ENCODE measurements at regions of chr3 and their contacts with region 1.

Region 1: DNA sequence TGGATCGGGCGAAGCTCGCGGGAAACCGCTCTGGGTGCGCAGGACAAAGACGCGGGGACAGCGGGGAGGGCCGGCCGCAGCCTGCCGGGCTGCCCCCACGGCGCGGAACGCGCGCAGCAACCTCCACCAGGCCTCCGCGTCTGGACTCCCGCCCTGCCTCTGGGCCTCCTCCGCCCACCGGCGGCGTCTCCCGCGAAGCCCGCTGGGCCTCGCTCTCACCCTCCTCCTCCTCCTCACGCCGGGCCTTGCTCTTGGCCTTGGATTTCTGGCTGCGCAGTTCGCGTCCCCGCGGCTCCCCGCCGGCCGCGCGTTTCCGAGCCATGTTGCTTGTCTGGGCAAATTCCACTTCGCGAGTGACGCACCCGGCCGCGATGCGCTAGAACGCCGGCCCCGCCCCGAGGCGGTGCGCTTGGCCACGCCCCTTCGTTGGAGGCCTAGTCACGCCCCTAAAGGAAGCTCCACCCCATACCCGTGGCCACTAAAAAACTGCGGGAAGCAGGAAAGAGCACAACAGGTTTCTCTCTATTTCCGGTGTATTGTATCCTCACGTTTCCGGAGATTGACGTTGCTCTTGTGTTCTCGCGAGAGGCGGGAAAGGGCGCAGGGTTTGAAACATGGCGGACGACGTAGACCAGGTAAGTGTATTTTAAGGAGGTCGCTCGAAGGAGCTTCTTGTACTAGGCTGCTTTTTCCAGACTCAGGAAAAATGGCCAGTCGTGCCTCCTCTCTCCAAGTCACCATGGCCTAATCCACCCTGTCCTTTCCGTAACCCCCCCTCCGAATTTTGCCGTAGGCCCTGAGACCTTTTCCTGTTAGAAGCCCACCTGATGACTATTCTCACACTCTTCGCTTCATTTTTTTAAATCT is at the starts of genes LSM3 and XPC:
- DNase-seq: peak; percentile 96 to 99 (median 98)
- ATAC-seq: peak; percentile 88
- H3K4me3 ChIP-seq: peak within 1 kb of the TSS; percentile 79
- H3K4me3 Mint-ChIP-seq: peak within 1 kb of the TSS; percentile 98
- H3K27ac ChIP-seq: peak within 1 kb of the TSS; percentile 94 to 97
- H3K27ac Mint-ChIP-seq: peak within 1 kb of the TSS; percentile 93
- H3K4me1 ChIP-seq: peaks cover 43% of the 10 kb centered on the region
- H3K4me1 Mint-ChIP-seq: peaks cover 76% of the 10 kb centered on the region
- H3K27me3 ChIP-seq: no peaks in the 10 kb centered on the region
- H3K27me3 Mint-ChIP-seq: no peaks in the 10 kb centered on the region
- CTCF ChIP-seq: no peak
- total RNA-seq, gene LSM3: 6.5 to 6.9 TPM
- total RNA-seq, gene XPC: 59.2 to 65.1 TPM

Region 2: DNA sequence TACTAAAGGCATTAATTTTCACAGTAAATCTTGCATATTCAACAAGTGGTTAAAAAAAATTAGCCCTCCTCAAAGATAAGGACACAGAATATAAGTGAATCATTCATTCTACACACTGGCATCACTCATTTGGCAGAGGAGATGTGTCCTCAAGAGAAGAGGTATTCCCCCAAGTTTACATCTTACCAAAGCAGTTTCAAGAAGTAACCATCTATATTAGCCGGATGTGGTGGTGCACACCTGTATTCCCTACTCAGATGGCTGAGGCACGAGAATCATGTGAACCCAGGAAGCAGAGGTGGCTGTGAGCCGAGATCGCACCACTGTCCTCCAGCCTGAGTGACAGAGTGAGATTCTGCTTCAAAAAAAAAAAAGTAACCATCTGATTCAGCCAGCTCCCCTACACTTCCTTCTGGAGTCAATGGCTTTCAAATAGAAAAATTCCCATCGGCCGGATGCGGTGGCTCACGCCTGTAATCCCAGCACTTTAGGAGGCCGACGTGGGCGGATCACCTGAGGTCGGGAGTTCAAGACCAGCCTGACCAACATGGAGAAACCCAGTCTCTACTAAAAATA is 1530.0 kb before region 1 on chr3:
- CTCF ChIA-PET with region 1: no interaction called
- POLR2A ChIA-PET with region 1: no interaction called
- intact Hi-C with region 1: no loop called
- DNase-seq: peak in 2 of 14 experiments; percentile 15 to 32
- ATAC-seq: peak; percentile 32
- H3K4me3 ChIP-seq: no peak overlapping the region
- H3K4me3 Mint-ChIP-seq: no peak overlapping the region
- H3K27ac ChIP-seq: no peak overlapping the region
- H3K27ac Mint-ChIP-seq: peak overlapping the region; percentile 51
- H3K4me1 ChIP-seq: peaks cover 24% of the 10 kb centered on the region
- H3K4me1 Mint-ChIP-seq: peaks cover 72% of the 10 kb centered on the region
- H3K27me3 ChIP-seq: no peaks in the 10 kb centered on the region
- H3K27me3 Mint-ChIP-seq: no peaks in the 10 kb centered on the region
- CTCF ChIP-seq: no peak

Region 3: GRCh38 chr3:12841149-12841970 is 1337.1 kb before region 1 on chr3 and contains the start of gene RPL32:
- CTCF ChIA-PET with region 1: interaction called, 4 read pairs
- POLR2A ChIA-PET with region 1: no interaction called
- intact Hi-C with region 1: loop called in 1 of 2 experiments (anchors 5 kb)
- DNase-seq: peak; percentile 76 to 96 (median 82)
- ATAC-seq: peak; percentile 91
- H3K4me3 ChIP-seq: peak within 1 kb of the TSS; percentile 86
- H3K4me3 Mint-ChIP-seq: peak within 1 kb of the TSS; percentile 93
- H3K27ac ChIP-seq: peak within 1 kb of the TSS; percentile 90 to 94
- H3K27ac Mint-ChIP-seq: peak within 1 kb of the TSS; percentile 99
- H3K4me1 ChIP-seq: peaks cover 39% of the 10 kb centered on the region
- H3K4me1 Mint-ChIP-seq: peaks cover 55% of the 10 kb centered on the region
- H3K27me3 ChIP-seq: no peaks in the 10 kb centered on the region
- H3K27me3 Mint-ChIP-seq: no peaks in the 10 kb centered on the region
- CTCF ChIP-seq: peak; percentile 74
- total RNA-seq, gene RPL32: 4,308 to 4,667 TPM

Region 4: GRCh38 chr3:13537921-13538320 is 640.6 kb before region 1 on chr3:
- CTCF ChIA-PET with region 1: no interaction called
- POLR2A ChIA-PET with region 1: no interaction called
- intact Hi-C with region 1: no loop called
- DNase-seq: no peak
- ATAC-seq: no peak
- H3K4me3 ChIP-seq: no peak overlapping the region
- H3K4me3 Mint-ChIP-seq: no peak overlapping the region
- H3K27ac ChIP-seq: no peak overlapping the region
- H3K27ac Mint-ChIP-seq: no peak overlapping the region
- H3K4me1 ChIP-seq: peaks cover 8% of the 10 kb centered on the region
- H3K4me1 Mint-ChIP-seq: peaks cover 8% of the 10 kb centered on the region
- H3K27me3 ChIP-seq: peaks cover 0 to 2% of the 10 kb centered on the region in 2 experiments
- H3K27me3 Mint-ChIP-seq: no peaks in the 10 kb centered on the region
- CTCF ChIP-seq: no peak

Region 5: GRCh38 chr3:13648060-13649001 is 530.1 kb before region 1 on chr3:
- CTCF ChIA-PET with region 1: no interaction called
- POLR2A ChIA-PET with region 1: no interaction called
- intact Hi-C with region 1: loop called in 1 of 2 experiments (anchors 10 kb)
- DNase-seq: peak; percentile 54 to 88 (median 73)
- ATAC-seq: peak; percentile 38
- H3K4me3 ChIP-seq: no peak overlapping the region
- H3K4me3 Mint-ChIP-seq: no peak overlapping the region
- H3K27ac ChIP-seq: no peak overlapping the region
- H3K27ac Mint-ChIP-seq: no peak overlapping the region
- H3K4me1 ChIP-seq: peaks cover 46% of the 10 kb centered on the region
- H3K4me1 Mint-ChIP-seq: peaks cover 51% of the 10 kb centered on the region
- H3K27me3 ChIP-seq: peaks cover 10 to 12% of the 10 kb centered on the region in 2 experiments
- H3K27me3 Mint-ChIP-seq: peaks cover 34% of the 10 kb centered on the region
- CTCF ChIP-seq: peak; percentile 95

Region 6: GRCh38 chr3:14144423-14145075 is 33.9 kb before region 1 on chr3:
- CTCF ChIA-PET with region 1: interaction called, 8 read pairs
- POLR2A ChIA-PET with region 1: interaction called, 106 read pairs
- intact Hi-C with region 1: loop called (anchors 1 to 2 kb)
- DNase-seq: peak; percentile 38 to 97 (median 66)
- ATAC-seq: peak; percentile 65
- H3K4me3 ChIP-seq: peak overlapping the region; percentile 26
- H3K4me3 Mint-ChIP-seq: peak overlapping the region; percentile 66
- H3K27ac ChIP-seq: peak overlapping the region; percentile 93 to 98
- H3K27ac Mint-ChIP-seq: peak overlapping the region; percentile 96
- H3K4me1 ChIP-seq: peaks cover 67% of the 10 kb centered on the region
- H3K4me1 Mint-ChIP-seq: peaks cover 59% of the 10 kb centered on the region
- H3K27me3 ChIP-seq: no peaks in the 10 kb centered on the region
- H3K27me3 Mint-ChIP-seq: no peaks in the 10 kb centered on the region
- CTCF ChIP-seq: no peak

Region 7: GRCh38 chr3:14166877-14167603 is 11.4 kb before region 1 on chr3:
- CTCF ChIA-PET with region 1: interaction called, 3 read pairs
- POLR2A ChIA-PET with region 1: interaction called, 14 read pairs
- intact Hi-C with region 1: no loop called
- DNase-seq: no peak
- ATAC-seq: no peak
- H3K4me3 ChIP-seq: no peak overlapping the region
- H3K4me3 Mint-ChIP-seq: no peak overlapping the region
- H3K27ac ChIP-seq: no peak overlapping the region
- H3K27ac Mint-ChIP-seq: no peak overlapping the region
- H3K4me1 ChIP-seq: peaks cover under 1% of the 10 kb centered on the region
- H3K4me1 Mint-ChIP-seq: peaks cover 45% of the 10 kb centered on the region
- H3K27me3 ChIP-seq: no peaks in the 10 kb centered on the region
- H3K27me3 Mint-ChIP-seq: no peaks in the 10 kb centered on the region
- CTCF ChIP-seq: no peak

Region 8: GRCh38 chr3:14651440-14652251 is 473.2 kb after region 1 on chr3 and contains the start of gene CCDC174:
- CTCF ChIA-PET with region 1: no interaction called
- POLR2A ChIA-PET with region 1: interaction called, 41 read pairs
- intact Hi-C with region 1: loop called in 1 of 2 experiments (anchors 1 kb)
- DNase-seq: peak; percentile 90 to 100 (median 94)
- ATAC-seq: peak; percentile 97
- H3K4me3 ChIP-seq: peak within 1 kb of the TSS; percentile 75
- H3K4me3 Mint-ChIP-seq: peak within 1 kb of the TSS; percentile 87
- H3K27ac ChIP-seq: peak within 1 kb of the TSS; percentile 76 to 97
- H3K27ac Mint-ChIP-seq: peak within 1 kb of the TSS; percentile 85
- H3K4me1 ChIP-seq: peaks cover 29% of the 10 kb centered on the region
- H3K4me1 Mint-ChIP-seq: peaks cover 61% of the 10 kb centered on the region
- H3K27me3 ChIP-seq: no peaks in the 10 kb centered on the region
- H3K27me3 Mint-ChIP-seq: no peaks in the 10 kb centered on the region
- CTCF ChIP-seq: no peak
- total RNA-seq, gene CCDC174: 32.9 to 37.5 TPM

Measured in CD4-positive, alpha-beta T cell (primary cell).